AG04450 (cell line): ENCODE measurements at regions of chr9 and their contacts with region 1.

Region 1: DNA sequence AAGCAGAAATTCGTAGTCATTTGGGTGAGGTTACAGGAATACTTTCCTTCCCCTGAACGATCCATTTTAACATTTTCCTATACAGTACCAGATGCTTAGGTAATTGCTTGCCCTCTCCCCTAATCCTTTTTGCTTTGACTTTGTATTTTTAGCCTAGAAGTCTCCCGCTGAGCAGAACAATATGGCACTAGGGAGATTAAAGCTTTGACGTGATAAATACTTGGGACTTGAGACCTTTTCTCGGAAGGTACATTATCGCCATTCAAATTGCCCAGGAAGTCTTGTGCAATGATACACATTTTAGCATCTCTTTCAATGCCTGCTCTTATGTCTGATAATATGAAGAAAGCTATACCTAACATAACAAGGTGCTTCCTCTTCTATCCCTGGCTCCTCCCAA is 22.9 kb upstream of the SPATA31C2 start:
- DNase-seq: no peak
- H3K4me3 ChIP-seq: no peak overlapping the region
- H3K27ac ChIP-seq: no peak overlapping the region
- H3K27me3 ChIP-seq: peaks cover 2% of the 10 kb centered on the region
- CTCF ChIP-seq: no peak

Region 2: GRCh38 chr9:87464110-87464965 is 696.8 kb before region 1 on chr9:
- CTCF ChIA-PET with region 1: no interaction called
- POLR2A ChIA-PET with region 1: interaction called, 11 read pairs
- DNase-seq: no peak
- H3K4me3 ChIP-seq: no peak overlapping the region
- H3K27ac ChIP-seq: no peak overlapping the region
- H3K27me3 ChIP-seq: no peaks in the 10 kb centered on the region
- CTCF ChIP-seq: no peak